ENCODE measurements at regions of chr1 and their contacts with region 1.

Region 1: GRCh38 chr1:50091068-50091467 is 17.7 kb upstream of the ELAVL4 start:
- DNase-seq: no peak
- ATAC-seq: no peak
- H3K4me3 ChIP-seq: no peak overlapping the region
- H3K27ac ChIP-seq: no peak overlapping the region
- H3K4me1 ChIP-seq: no peaks in the 10 kb centered on the region
- H3K27me3 ChIP-seq: no peaks in the 10 kb centered on the region
- CTCF ChIP-seq: no peak
- EP300 ChIP-seq: no peak
- POLR2A ChIP-seq: no peak
- RAD21 ChIP-seq: no peak

Region 2: DNA sequence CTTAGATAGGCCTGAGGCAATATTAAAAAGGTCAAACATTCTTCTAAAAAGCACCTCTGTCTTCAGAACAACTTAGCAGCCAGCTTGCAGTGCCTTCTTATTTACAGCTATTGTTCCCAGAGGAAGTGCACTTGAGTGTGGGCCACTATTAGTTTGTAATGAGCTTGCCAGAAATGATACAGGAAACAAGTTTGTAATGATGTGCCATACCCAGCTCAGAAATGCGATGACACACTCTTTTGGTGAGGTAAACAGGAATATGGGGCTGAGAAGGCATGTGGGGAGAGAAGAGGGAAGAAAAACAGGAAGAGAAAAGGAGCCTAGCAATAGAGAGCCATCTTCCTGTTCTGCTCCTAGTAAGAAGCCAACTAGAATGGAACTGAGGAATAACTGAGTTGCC is 362.7 kb before region 1 on chr1:
- CTCF ChIA-PET with region 1: no interaction called
- POLR2A ChIA-PET with region 1: no interaction called
- RAD21 ChIA-PET with region 1: no interaction called
- SMC1A ChIA-PET with region 1: no interaction called
- in situ Hi-C with region 1: no loop called
- intact Hi-C with region 1: no loop called
- DNase-seq: no peak
- ATAC-seq: no peak
- H3K4me3 ChIP-seq: no peak overlapping the region
- H3K27ac ChIP-seq: no peak overlapping the region
- H3K4me1 ChIP-seq: no peaks in the 10 kb centered on the region
- H3K27me3 ChIP-seq: no peaks in the 10 kb centered on the region
- CTCF ChIP-seq: no peak
- EP300 ChIP-seq: no peak
- POLR2A ChIP-seq: no peak
- RAD21 ChIP-seq: no peak

Region 3: DNA sequence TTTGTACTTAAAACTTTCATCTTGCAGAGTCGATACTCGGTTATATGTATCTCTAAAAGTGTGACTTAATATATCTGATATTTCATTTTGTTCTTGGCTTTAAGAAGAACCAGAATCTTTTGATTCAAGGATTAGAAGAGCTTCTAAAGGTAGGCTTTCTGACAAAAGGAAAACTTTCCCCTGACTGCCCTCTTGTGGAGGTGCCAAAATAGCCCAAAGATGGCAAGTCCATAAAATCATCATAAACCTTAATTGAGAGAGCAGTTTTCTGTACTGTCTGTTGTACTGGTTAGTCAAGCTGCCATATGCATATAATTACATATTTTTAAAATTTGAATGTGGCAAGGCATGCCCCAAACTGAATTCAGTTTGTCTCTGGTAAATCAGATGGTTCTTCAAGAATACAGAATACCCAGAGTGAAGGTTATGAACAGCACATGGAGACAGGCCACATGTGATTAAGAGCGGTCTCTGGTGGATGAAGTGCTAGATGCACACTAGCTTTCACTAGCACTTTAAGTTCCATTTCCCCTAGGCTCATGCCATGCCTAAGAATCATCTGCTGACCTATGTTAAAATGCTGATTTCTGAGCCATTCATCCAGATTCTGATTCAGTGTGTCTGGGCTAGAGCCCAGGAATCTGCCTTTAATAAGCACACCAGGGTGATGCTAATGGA is 10.0 kb before region 1 on chr1:
- CTCF ChIA-PET with region 1: interaction called, 11 read pairs
- POLR2A ChIA-PET with region 1: no interaction called
- RAD21 ChIA-PET with region 1: no interaction called
- SMC1A ChIA-PET with region 1: interaction called, 4 read pairs
- in situ Hi-C with region 1: no loop called
- intact Hi-C with region 1: no loop called
- DNase-seq: no peak
- ATAC-seq: 0 out of 3 replicates have a peak, but pooled peaks have one; percentile 27
- H3K4me3 ChIP-seq: no peak overlapping the region
- H3K27ac ChIP-seq: no peak overlapping the region
- H3K4me1 ChIP-seq: no peaks in the 10 kb centered on the region
- H3K27me3 ChIP-seq: no peaks in the 10 kb centered on the region
- CTCF ChIP-seq: peak; percentile 32 to 37 (median 33); a peak in 3 of 6 replicates
- EP300 ChIP-seq: no peak
- POLR2A ChIP-seq: no peak
- RAD21 ChIP-seq: peak; percentile 26; the same call in 1 of the 2 replicates